H1 (cell line): ENCODE measurements at regions of chr12 and their contacts with region 1.

Region 1: DNA sequence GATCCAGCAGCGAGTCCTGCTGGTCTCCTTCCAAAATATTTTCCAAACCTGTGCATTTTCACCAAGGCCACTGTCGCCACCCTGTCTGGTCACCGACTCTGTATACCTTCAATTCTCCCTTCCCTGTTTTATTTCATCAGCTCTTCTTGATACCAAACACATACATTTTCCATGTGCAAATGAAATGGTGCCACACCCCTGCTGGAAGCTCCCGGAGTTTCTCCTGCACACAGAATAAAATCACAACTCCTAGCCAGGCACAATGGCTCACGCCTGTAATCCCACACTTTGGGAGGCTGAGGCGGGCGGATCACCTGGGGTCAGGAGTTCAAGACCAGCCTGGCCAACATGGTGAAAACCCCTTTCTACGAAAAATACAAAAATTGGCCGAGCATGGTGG is 14.0 kb downstream of the VSIG10 start:
- DNase-seq: no peak
- H3K4me3 ChIP-seq: no peak overlapping the region
- H3K27ac ChIP-seq: no peak overlapping the region
- H3K4me1 ChIP-seq: no peaks in the 10 kb centered on the region
- H3K27me3 ChIP-seq: no peaks in the 10 kb centered on the region
- CTCF ChIP-seq: no peak
- EP300 ChIP-seq: no peak
- POLR2A ChIP-seq: 0 out of 3 replicates have a peak, but pooled peaks of 1 of the 2 experiments have one; percentile 25
- RAD21 ChIP-seq: no peak

Region 2: DNA sequence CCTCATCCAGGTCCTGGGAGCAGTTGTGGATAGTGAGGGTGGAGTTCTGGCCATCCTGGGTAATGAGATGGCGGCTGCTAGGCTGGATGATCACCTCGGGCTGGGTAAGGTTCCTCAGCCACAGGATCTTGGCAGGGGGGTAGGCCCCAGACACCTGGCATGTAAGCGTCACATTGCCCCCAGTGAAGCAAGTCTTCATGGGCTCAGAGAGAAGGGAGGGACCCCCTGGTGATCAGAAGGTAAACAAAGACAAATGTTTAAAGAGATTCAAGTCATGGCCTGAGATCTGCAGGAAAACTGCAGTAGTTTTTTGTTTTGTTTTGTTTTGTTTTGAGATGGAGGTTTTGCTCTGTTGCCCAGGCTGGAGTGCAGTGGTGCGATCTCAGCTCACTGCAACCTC is 16.0 kb before region 1 on chr12:
- CTCF ChIA-PET with region 1: interaction called, 3 read pairs
- POLR2A ChIA-PET with region 1: interaction called, 20 read pairs
- DNase-seq: no peak
- H3K4me3 ChIP-seq: no peak overlapping the region
- H3K27ac ChIP-seq: no peak overlapping the region
- H3K4me1 ChIP-seq: no peaks in the 10 kb centered on the region
- H3K27me3 ChIP-seq: no peaks in the 10 kb centered on the region
- CTCF ChIP-seq: no peak
- EP300 ChIP-seq: no peak
- POLR2A ChIP-seq: no peak
- RAD21 ChIP-seq: no peak

Region 3: DNA sequence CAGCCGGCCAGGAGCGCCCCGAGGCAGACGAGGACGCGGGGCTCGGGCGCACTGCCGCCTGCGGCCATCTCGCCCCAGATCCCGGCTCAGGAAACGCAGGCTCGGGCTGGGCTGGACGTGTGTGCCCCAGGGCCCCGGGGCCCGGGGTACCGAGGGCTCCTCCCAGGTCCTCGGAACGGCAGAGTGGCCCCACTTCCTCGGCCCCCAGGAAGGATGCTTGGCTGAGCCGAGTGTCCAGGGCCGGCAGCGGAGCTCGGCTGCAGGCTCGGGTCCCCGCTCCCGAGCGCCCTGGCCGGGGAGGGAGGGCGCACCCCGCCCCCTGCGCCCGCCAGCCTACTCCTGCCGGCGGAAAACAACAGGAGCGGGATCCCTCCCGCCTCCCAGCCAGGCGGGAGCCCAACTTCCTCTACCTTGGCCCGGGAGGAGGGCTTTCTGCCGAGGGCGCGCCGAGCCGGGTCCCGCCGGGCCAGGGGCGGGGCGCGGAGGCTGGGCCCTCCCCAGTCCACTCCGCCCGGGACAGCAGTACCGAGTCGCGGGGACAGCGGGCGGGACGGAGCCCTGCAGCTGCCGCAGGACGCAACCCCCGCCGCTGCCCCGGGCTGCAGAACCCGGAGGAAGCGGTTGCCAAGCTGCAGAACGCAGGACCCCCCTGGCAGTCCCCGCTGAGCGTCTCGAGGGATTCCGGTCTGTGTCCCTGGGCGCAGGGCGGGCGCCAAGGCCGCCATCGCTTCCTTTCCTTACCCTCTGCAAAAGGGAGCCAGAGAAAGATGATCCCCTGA is 14.0 kb after region 1 on chr12 and contains the start of gene VSIG10:
- CTCF ChIA-PET with region 1: interaction called, 6 read pairs
- POLR2A ChIA-PET with region 1: interaction called, 59 read pairs
- DNase-seq: peak in 1 of 2 experiments; percentile 80
- H3K4me3 ChIP-seq: peak within 1 kb of the TSS; percentile 81 to 91 (median 87)
- H3K27ac ChIP-seq: peak within 1 kb of the TSS; percentile 91; the same call in 1 of the 2 replicates
- H3K4me1 ChIP-seq: peaks cover 0 to 9% (median 4%) of the 10 kb centered on the region in 4 experiments; a peak in 4 of 7 replicates
- H3K27me3 ChIP-seq: no peaks in the 10 kb centered on the region
- CTCF ChIP-seq: no peak
- EP300 ChIP-seq: no peak
- POLR2A ChIP-seq: no peak; a peak in 1 of 3 replicates
- RAD21 ChIP-seq: no peak
- total RNA-seq, gene VSIG10: 93.6 and 96.8 TPM in 2 replicates

Region 4: GRCh38 chr12:118127867-118128266 is 38.1 kb after region 1 on chr12:
- CTCF ChIA-PET with region 1: no interaction called
- POLR2A ChIA-PET with region 1: no interaction called
- DNase-seq: no peak
- H3K4me3 ChIP-seq: no peak overlapping the region
- H3K27ac ChIP-seq: no peak overlapping the region
- H3K4me1 ChIP-seq: peaks cover 0 to 4% (median 0%) of the 10 kb centered on the region in 4 experiments; a peak in 1 of 7 replicates
- H3K27me3 ChIP-seq: no peaks in the 10 kb centered on the region
- CTCF ChIP-seq: no peak
- EP300 ChIP-seq: no peak
- POLR2A ChIP-seq: no peak
- RAD21 ChIP-seq: no peak